Gastrocnemius medialis (tissue), 4 donors: ENCODE measurements at regions of chr4 and their contacts with region 1.

Region 1: GRCh38 chr4:26330186-26330787 is 9.5 kb downstream of the RBPJ start:
- DNase-seq: no peak
- ATAC-seq: peak; percentile 67 to 77
- H3K4me3 ChIP-seq: no peak overlapping the region
- H3K27ac ChIP-seq: no peak overlapping the region
- H3K4me1 ChIP-seq: peaks cover 29 to 55% of the 10 kb centered on the region in 2 donors
- H3K27me3 ChIP-seq: no peaks in the 10 kb centered on the region
- CTCF ChIP-seq: peak; percentile 62 to 75 (median 67)
- POLR2A ChIP-seq: no peak

Region 2: GRCh38 chr4:26397086-26397485 is 66.8 kb after region 1 on chr4:
- in situ Hi-C with region 1: loop called in 2 of 4 experiments (anchors 10 kb)
- intact Hi-C with region 1: no loop called
- DNase-seq: no peak
- ATAC-seq: no peak
- H3K4me3 ChIP-seq: no peak overlapping the region
- H3K27ac ChIP-seq: no peak overlapping the region
- H3K4me1 ChIP-seq: no peaks in the 10 kb centered on the region
- H3K27me3 ChIP-seq: no peaks in the 10 kb centered on the region
- CTCF ChIP-seq: no peak
- POLR2A ChIP-seq: no peak